ENCODE measurements at regions of chr15 and their contacts with region 1.

Region 1: GRCh38 chr15:101014921-101015841 is 96.0 kb downstream of the LRRK1 start:
- DNase-seq: peak; percentile 78 to 90 (median 90)
- ATAC-seq: peak; percentile 76 to 79
- H3K4me3 ChIP-seq: no peak overlapping the region
- H3K27ac ChIP-seq: no peak overlapping the region
- H3K4me1 ChIP-seq: no peaks in the 10 kb centered on the region
- H3K27me3 ChIP-seq: no peaks in the 10 kb centered on the region

Region 2: DNA sequence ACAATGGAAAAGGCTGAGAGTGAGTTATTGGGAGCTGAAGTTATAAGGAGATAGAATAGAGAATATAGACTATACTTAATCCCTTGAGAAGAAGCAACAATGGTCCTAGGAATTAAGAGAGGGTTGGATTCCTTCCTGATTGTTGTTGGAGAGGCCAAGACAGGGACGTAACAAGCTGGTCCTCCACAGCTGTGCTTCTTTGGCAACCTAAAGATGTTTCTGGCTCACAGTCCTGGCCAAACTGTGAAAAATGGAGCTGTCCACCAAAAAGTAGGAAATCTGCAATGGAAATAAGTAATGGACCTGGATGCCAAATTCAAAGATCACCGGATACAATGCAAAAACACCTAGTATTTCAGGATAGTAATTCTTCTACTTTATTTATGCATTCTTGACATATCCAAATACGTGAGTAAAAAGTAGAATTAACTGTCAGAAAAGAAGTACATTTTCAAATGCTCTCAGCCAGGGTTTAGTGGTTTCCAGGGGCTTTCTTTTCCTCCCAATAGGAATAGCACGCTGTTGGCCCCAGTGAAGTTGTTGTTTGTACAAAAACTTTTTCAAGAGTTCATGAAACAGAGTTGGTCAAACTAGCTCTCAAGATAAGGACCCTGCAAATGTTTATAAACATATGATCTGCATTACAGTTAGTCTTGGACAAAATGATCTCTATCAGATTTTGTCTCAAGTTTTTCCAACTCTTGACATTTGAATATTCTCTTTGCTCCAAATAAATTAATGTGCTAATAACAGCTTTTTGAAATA is 514.8 kb before region 1 on chr15:
- intact Hi-C with region 1: no loop called
- DNase-seq: no peak
- ATAC-seq: no peak
- H3K4me3 ChIP-seq: no peak overlapping the region
- H3K27ac ChIP-seq: no peak overlapping the region
- H3K4me1 ChIP-seq: no peaks in the 10 kb centered on the region
- H3K27me3 ChIP-seq: no peaks in the 10 kb centered on the region

Region 3: DNA sequence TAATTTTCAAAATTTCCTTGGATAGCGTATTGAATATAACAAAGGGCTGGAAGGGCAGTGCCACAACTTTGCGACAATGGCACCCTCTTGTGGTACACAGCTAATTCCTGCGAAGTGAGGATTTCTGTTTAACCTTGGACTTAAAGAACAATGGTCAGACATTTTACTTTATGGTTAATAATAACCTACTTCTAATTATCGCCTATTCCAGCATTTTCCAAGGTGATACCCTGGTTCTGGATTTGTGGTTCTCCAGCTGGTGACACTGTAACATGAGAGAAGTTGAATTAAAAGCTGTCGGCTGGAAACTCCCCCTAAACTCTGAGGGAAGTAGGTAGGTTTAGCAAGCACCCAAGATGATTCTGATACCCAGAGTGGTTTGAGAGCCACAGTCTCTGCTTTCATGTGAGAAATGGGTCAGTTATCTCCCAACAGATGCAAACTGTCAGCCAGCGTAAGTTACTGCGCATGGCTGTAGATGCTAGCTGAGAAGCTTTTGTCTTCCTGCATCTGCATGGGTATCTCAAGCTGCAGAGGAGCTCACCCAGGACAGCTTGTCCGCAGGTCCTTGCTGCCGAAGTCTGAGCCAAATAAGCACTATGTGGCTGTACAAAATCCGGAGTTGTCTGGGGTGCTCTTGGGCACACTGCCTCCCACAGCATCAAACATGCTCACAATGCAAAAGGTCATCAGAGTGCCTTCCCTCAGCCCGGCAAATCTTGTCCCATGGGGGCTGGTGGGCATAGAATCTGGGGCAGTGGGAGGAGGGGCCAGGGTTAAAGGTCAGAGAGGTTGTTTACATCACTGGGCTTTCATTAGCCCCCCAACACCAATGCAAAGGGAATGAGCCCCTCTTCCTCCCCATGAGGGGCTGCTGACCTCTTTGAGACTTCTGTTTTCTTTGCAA is 243.3 kb after region 1 on chr15:
- intact Hi-C with region 1: loop called (anchors 2 to 5 kb)
- DNase-seq: peak; percentile 63 to 69 (median 68)
- ATAC-seq: peak; percentile 42 to 50
- H3K4me3 ChIP-seq: no peak overlapping the region
- H3K27ac ChIP-seq: no peak overlapping the region
- H3K4me1 ChIP-seq: no peaks in the 10 kb centered on the region
- H3K27me3 ChIP-seq: no peaks in the 10 kb centered on the region